AG04450 (cell line): ENCODE measurements at regions of chr17 and their contacts with region 1.

Region 1: GRCh38 chr17:19766422-19767270 is 18.5 kb upstream of the ALDH3A1 start:
- DNase-seq: no peak
- H3K4me3 ChIP-seq: no peak overlapping the region
- H3K27ac ChIP-seq: no peak overlapping the region
- H3K27me3 ChIP-seq: peaks cover 10% of the 10 kb centered on the region
- CTCF ChIP-seq: peak; percentile 99

Region 2: GRCh38 chr17:19354748-19355147 is 411.9 kb before region 1 on chr17:
- CTCF ChIA-PET with region 1: interaction called, 10 read pairs
- POLR2A ChIA-PET with region 1: no interaction called
- DNase-seq: no peak
- H3K4me3 ChIP-seq: no peak overlapping the region
- H3K27ac ChIP-seq: no peak overlapping the region
- H3K27me3 ChIP-seq: no peaks in the 10 kb centered on the region
- CTCF ChIP-seq: no peak

Region 3: DNA sequence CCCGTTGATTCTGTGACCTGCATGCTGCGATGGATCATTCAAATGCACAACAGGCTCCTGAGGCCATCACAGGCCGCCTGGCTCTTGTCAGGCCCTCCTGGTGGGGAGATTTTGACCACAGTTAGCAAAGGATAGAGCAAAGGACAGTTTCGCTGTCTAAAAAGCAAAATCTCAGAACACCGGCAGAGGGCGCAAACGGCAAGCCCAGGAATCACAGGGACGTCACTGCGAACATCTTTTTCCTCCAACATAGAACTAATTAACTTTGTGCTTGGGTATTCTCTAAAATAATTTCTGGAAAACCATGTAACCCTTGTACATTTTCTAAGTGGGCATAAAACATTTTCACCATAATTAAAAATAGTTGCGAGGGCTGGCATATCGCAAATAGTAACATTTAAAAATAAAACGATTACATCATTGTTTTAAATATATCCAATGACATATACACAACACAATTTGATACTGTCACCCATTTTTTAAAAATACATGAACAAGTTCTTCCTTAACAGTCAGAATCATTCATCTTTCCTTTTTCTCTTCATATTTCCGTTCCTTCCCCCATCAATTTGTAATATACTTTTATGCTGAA is 252.7 kb before region 1 on chr17:
- CTCF ChIA-PET with region 1: interaction called, 174 read pairs
- POLR2A ChIA-PET with region 1: no interaction called
- DNase-seq: peak; percentile 24
- H3K4me3 ChIP-seq: no peak overlapping the region
- H3K27ac ChIP-seq: no peak overlapping the region
- H3K27me3 ChIP-seq: peaks cover 8% of the 10 kb centered on the region
- CTCF ChIP-seq: peak; percentile 94

Region 4: GRCh38 chr17:19648475-19649406 is 117.9 kb before region 1 on chr17 and contains the start of gene ALDH3A2:
- CTCF ChIA-PET with region 1: interaction called, 18 read pairs
- POLR2A ChIA-PET with region 1: interaction called, 4 read pairs
- DNase-seq: peak; percentile 51
- H3K4me3 ChIP-seq: peak within 1 kb of the TSS; percentile 80
- H3K27ac ChIP-seq: peak within 1 kb of the TSS; percentile 68
- H3K27me3 ChIP-seq: peaks cover 10% of the 10 kb centered on the region
- CTCF ChIP-seq: no peak; the same call in 1 of the 2 replicates
- polyA plus RNA-seq, gene ALDH3A2: 11.0 and 13.4 TPM in 2 replicates

Region 5: DNA sequence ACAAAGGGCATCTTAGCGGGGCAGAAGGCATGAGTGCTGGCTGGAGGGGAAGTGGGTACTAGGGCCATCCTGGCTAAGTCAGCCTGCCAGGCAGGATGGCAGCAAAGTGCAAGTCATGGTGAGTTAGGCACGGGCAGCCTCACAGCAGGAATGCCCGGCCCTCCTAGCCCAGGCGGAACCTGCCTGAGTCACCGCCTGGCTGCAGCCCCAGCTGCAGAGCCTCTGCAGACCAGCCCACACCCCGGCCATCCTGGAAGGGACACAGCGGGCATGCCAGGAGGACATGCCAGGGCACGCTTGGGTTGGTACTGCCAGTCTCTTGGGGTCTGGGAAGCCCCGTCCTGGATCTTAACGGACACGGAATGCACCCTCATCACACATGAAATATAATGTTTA is 13.6 kb before region 1 on chr17:
- CTCF ChIA-PET with region 1: interaction called, 17 read pairs
- POLR2A ChIA-PET with region 1: no interaction called
- DNase-seq: no peak
- H3K4me3 ChIP-seq: no peak overlapping the region
- H3K27ac ChIP-seq: peak overlapping the region; percentile 31
- H3K27me3 ChIP-seq: peaks cover 29% of the 10 kb centered on the region
- CTCF ChIP-seq: no peak